Astrocyte of the cerebellum (primary cell): ENCODE measurements at regions of chr5 and their contacts with region 1.

Region 1: GRCh38 chr5:157464519-157465171 is 4.6 kb downstream of the NIPAL4 start:
- DNase-seq: peak; percentile 45
- H3K4me3 ChIP-seq: no peak overlapping the region
- CTCF ChIP-seq: no peak

Region 2: GRCh38 chr5:157384971-157385709 is 79.5 kb before region 1 on chr5:
- in situ Hi-C with region 1: loop called (anchors 5 kb)
- DNase-seq: peak; percentile 83
- H3K4me3 ChIP-seq: no peak overlapping the region
- CTCF ChIP-seq: no peak

Region 3: DNA sequence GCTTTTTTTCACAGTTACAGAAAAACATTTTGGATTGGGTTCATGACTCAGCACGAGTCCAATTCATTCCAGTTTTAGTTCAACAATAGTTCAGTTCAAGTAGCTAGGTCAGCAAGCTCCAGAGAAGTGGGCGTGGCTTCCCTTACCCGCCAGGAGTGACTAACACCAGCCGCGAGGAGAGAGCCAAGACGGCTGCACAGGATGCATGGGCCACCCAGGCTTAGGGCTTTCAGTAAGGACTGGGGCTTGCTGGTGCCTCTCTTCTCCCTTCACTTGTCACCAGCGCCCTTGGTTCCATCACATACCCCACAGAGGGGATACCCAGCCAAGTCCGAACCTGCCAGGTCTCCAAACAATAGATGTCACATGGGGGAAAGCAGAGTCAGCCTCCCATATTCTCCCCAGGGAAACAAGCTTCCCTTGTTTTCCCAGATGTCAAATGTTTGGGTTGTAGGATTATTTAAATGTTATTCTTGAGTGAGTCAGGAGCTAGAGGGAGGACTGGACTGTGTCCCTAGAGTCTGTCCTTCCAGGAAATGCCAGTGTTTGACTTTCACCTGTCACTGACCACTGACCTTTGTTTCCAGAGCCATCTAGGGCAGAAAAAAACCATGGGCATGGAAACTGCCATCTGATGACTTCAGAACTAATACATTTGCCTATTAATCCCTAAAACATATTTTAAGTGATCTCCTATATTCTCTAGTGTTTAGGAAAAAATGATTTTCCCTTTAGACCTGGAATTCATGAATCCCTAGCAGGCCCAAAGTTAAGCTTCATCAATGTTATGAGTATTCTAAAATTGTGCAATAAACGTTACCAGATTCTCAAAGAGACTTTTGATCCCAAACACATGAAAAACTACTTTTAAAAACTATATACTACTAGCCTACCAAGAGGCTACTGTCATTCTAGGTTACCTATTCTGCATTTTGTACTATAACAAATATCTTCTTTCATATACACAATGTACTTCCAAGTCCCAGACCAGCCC is 47.3 kb after region 1 on chr5:
- in situ Hi-C with region 1: no loop called
- DNase-seq: peak; percentile 98
- H3K4me3 ChIP-seq: no peak overlapping the region
- CTCF ChIP-seq: no peak